Common myeloid progenitor, CD34-positive (primary cell): ENCODE measurements at regions of chr2 and their contacts with region 1.

Region 1: GRCh38 chr2:222707689-222708525 is 36.4 kb downstream of the MOGAT1 start:
- DNase-seq: peak; percentile 49 to 80 (median 72)
- H3K4me3 ChIP-seq: no peak overlapping the region
- H3K27ac ChIP-seq: no peak overlapping the region
- H3K4me1 ChIP-seq: peaks cover 0 to 16% (median 8%) of the 10 kb centered on the region in 4 experiments
- H3K27me3 ChIP-seq: peaks cover 0 to 2% (median 0%) of the 10 kb centered on the region in 5 experiments

Region 2: DNA sequence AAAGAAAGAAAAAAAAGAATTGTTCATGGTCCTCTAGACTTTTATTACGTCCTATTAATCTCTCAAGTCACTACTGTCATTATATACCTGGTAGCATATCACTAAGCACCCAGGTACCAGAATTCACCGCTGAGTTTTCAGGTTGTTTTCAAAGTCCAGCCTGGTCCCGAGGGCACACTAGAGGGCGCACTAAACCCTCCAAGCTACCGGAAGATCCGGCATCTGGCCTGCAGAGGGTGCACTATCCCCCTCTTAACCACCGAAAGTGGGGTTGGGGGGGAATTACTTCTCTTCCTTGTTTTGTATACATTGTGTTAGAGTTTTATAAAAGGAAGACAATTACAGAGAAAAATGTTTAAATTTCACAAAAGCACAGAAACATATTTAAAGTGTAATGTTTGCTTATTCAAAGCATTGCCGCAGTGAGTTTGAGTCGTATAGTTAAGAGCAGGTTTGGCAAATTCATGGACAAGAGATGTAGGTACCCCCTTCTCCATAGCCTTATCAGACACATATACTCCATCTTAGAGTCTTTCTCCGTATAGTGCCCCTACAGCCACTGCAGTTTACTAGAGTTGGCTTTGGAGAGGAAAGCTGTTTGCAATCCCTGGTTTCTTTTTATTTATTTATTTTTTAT is 17.2 kb before region 1 on chr2:
- CTCF ChIA-PET with region 1: interaction called, 15 read pairs
- POLR2A ChIA-PET with region 1: no interaction called
- DNase-seq: peak; percentile 80 to 92 (median 89)
- H3K4me3 ChIP-seq: no peak overlapping the region
- H3K27ac ChIP-seq: no peak overlapping the region
- H3K4me1 ChIP-seq: peaks cover 0 to 8% (median 0%) of the 10 kb centered on the region in 4 experiments
- H3K27me3 ChIP-seq: no peaks in the 10 kb centered on the region

Region 3: DNA sequence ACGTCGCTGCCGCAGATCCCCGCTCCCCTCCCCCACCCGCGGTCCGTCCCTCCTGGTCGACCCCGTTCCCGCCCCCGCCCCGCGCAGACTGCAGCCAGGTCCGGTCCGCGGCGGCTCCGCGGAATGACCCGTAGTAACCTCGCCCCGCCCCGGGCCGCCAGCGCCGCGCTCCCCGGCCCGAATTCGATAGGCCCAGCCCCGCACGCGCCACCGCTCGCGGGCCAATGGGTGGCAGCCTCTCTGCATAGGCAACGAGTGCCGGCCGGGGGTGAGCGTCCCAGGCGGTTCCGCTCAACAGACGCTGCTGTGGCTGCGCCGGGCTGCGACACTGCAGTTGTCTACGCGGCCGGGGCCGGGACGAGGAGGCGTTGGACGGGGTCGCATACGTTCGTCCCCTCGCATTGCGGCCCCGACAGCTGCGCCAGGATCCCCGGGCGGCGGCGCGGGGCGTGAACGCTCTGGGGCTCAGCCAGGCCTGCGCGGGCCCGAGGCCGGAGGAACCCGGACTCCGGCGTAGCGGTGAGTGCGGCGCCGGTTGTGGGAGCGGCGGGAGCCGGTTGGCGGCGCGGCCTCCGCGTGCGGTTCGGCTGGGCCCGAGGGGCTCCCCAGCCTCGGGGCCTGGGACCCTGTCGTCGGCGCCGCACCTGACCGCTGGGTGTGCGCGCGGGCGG is 153.0 kb after region 1 on chr2 and contains the start of gene ACSL3:
- CTCF ChIA-PET with region 1: interaction called, 20 read pairs
- POLR2A ChIA-PET with region 1: no interaction called
- DNase-seq: peak; percentile 89 to 96 (median 94)
- H3K4me3 ChIP-seq: peak within 1 kb of the TSS; percentile 68 to 89 (median 84)
- H3K27ac ChIP-seq: peak within 1 kb of the TSS; percentile 37 to 74
- H3K4me1 ChIP-seq: peaks cover 10 to 41% (median 16%) of the 10 kb centered on the region in 4 experiments
- H3K27me3 ChIP-seq: no peaks in the 10 kb centered on the region

Region 4: GRCh38 chr2:222903234-222904220 is 195.6 kb after region 1 on chr2:
- CTCF ChIA-PET with region 1: interaction called, 25 read pairs
- POLR2A ChIA-PET with region 1: no interaction called
- DNase-seq: peak; percentile 52 to 73 (median 64)
- H3K4me3 ChIP-seq: no peak overlapping the region
- H3K27ac ChIP-seq: no peak overlapping the region
- H3K4me1 ChIP-seq: no peaks in the 10 kb centered on the region
- H3K27me3 ChIP-seq: no peaks in the 10 kb centered on the region

Region 5: GRCh38 chr2:222912117-222912516 is 204.2 kb after region 1 on chr2:
- CTCF ChIA-PET with region 1: interaction called, 20 read pairs
- POLR2A ChIA-PET with region 1: no interaction called
- DNase-seq: peak; percentile 9 to 59 (median 51)
- H3K4me3 ChIP-seq: no peak overlapping the region
- H3K27ac ChIP-seq: no peak overlapping the region
- H3K4me1 ChIP-seq: peaks cover 0 to 12% (median 2%) of the 10 kb centered on the region in 4 experiments
- H3K27me3 ChIP-seq: no peaks in the 10 kb centered on the region